Gastrocnemius medialis (tissue), 4 donors: ENCODE measurements at regions of chr7 and their contacts with region 1.

Region 1: GRCh38 chr7:121081327-121081936 is 92.9 kb downstream of the CPED1 start:
- DNase-seq: no peak
- ATAC-seq: peak; percentile 48 to 53
- H3K4me3 ChIP-seq: no peak overlapping the region
- H3K27ac ChIP-seq: peak overlapping the region; percentile 69 to 90 (median 80)
- H3K4me1 ChIP-seq: peaks cover 80 to 87% of the 10 kb centered on the region in 2 donors
- H3K27me3 ChIP-seq: no peaks in the 10 kb centered on the region
- CTCF ChIP-seq: peak; percentile 73 to 84 (median 77)
- POLR2A ChIP-seq: no peak

Region 2: GRCh38 chr7:120987683-120988590 is 93.5 kb before region 1 on chr7:
- in situ Hi-C with region 1: loop called (anchors 5 to 10 kb)
- intact Hi-C with region 1: loop called (anchors 1 kb)
- DNase-seq: peak; percentile 84 to 91
- ATAC-seq: peak; percentile 60 to 76
- H3K4me3 ChIP-seq: peak overlapping the region; percentile 65 to 72 (median 66)
- H3K27ac ChIP-seq: peak overlapping the region; percentile 91 to 98 (median 94)
- H3K4me1 ChIP-seq: peaks cover 10 to 21% of the 10 kb centered on the region in 2 donors
- H3K27me3 ChIP-seq: no peaks in the 10 kb centered on the region
- CTCF ChIP-seq: peak; percentile 83 to 96 (median 94)
- POLR2A ChIP-seq: no peak

Region 3: GRCh38 chr7:120996333-120996987 is 85.0 kb before region 1 on chr7:
- in situ Hi-C with region 1: loop called in 2 of 4 experiments (anchors 5 to 10 kb)
- intact Hi-C with region 1: no loop called
- DNase-seq: peak; percentile 71 to 72
- ATAC-seq: no peak
- H3K4me3 ChIP-seq: no peak overlapping the region
- H3K27ac ChIP-seq: peak overlapping the region; percentile 91 to 98 (median 94)
- H3K4me1 ChIP-seq: peaks cover 82 to 90% of the 10 kb centered on the region in 2 donors
- H3K27me3 ChIP-seq: no peaks in the 10 kb centered on the region
- CTCF ChIP-seq: no peak
- POLR2A ChIP-seq: no peak

Region 4: DNA sequence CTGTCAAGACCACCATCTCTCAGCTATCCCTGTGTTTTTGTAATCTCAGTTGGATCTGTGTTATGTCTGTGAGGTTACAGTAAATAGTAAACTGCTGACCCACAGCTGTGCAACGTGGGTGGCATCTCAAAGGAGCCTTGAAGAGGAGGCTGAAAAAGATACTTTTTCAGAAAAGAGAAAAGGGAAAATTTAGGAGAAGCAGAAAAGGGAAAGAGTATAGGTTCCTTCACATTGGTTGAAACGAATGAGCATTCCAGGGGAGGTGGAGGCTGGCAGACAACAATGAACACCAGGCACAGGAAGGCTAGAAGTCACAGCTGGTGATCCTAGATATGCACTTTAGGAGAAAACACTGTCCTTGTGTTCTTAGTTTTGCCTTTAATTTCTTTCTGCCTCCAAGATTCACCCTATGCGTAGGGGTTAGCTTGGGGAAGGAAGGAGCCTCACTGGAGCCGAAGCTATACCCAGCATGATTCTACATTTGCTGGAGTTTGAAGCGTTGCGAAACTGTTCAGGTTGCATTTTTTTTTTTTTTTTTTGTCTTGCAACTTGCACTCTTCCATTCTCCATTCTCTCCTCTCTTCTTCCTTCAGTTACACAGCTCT is 74.6 kb before region 1 on chr7:
- in situ Hi-C with region 1: no loop called
- intact Hi-C with region 1: no loop called
- DNase-seq: no peak
- ATAC-seq: no peak
- H3K4me3 ChIP-seq: no peak overlapping the region
- H3K27ac ChIP-seq: peak overlapping the region; percentile 91 to 98 (median 94)
- H3K4me1 ChIP-seq: peaks cover 79 to 88% of the 10 kb centered on the region in 2 donors
- H3K27me3 ChIP-seq: no peaks in the 10 kb centered on the region
- CTCF ChIP-seq: no peak
- POLR2A ChIP-seq: no peak

Region 5: GRCh38 chr7:121214657-121215056 is 133.2 kb after region 1 on chr7:
- in situ Hi-C with region 1: no loop called
- intact Hi-C with region 1: no loop called
- DNase-seq: no peak
- ATAC-seq: no peak
- H3K4me3 ChIP-seq: no peak overlapping the region
- H3K27ac ChIP-seq: peak overlapping the region in 2 of 4 donors; percentile 21 to 30
- H3K4me1 ChIP-seq: peaks cover 5% of the 10 kb centered on the region in 2 donors
- H3K27me3 ChIP-seq: no peaks in the 10 kb centered on the region
- CTCF ChIP-seq: no peak
- POLR2A ChIP-seq: no peak